ENCODE measurements at regions of chr14 and their contacts with region 1.

Region 1: GRCh38 chr14:63877550-63877939 is 24.7 kb downstream of the SYNE2 start:
- DNase-seq: no peak
- ATAC-seq: no peak
- H3K4me3 ChIP-seq: no peak overlapping the region
- H3K4me3 Mint-ChIP-seq: no peak overlapping the region
- H3K27ac ChIP-seq: no peak overlapping the region
- H3K27ac Mint-ChIP-seq: no peak overlapping the region
- H3K4me1 ChIP-seq: peaks cover 4% of the 10 kb centered on the region
- H3K4me1 Mint-ChIP-seq: peaks cover 42% of the 10 kb centered on the region
- H3K27me3 ChIP-seq: no peaks in the 10 kb centered on the region
- H3K27me3 Mint-ChIP-seq: no peaks in the 10 kb centered on the region
- CTCF ChIP-seq: no peak

Region 2: GRCh38 chr14:63686951-63687350 is 190.6 kb before region 1 on chr14:
- CTCF ChIA-PET with region 1: no interaction called
- POLR2A ChIA-PET with region 1: no interaction called
- intact Hi-C with region 1: no loop called
- DNase-seq: no peak
- ATAC-seq: no peak
- H3K4me3 ChIP-seq: no peak overlapping the region
- H3K4me3 Mint-ChIP-seq: no peak overlapping the region
- H3K27ac ChIP-seq: no peak overlapping the region
- H3K27ac Mint-ChIP-seq: no peak overlapping the region
- H3K4me1 ChIP-seq: no peaks in the 10 kb centered on the region
- H3K4me1 Mint-ChIP-seq: peaks cover 2% of the 10 kb centered on the region
- H3K27me3 ChIP-seq: no peaks in the 10 kb centered on the region
- H3K27me3 Mint-ChIP-seq: no peaks in the 10 kb centered on the region
- CTCF ChIP-seq: no peak

Region 3: DNA sequence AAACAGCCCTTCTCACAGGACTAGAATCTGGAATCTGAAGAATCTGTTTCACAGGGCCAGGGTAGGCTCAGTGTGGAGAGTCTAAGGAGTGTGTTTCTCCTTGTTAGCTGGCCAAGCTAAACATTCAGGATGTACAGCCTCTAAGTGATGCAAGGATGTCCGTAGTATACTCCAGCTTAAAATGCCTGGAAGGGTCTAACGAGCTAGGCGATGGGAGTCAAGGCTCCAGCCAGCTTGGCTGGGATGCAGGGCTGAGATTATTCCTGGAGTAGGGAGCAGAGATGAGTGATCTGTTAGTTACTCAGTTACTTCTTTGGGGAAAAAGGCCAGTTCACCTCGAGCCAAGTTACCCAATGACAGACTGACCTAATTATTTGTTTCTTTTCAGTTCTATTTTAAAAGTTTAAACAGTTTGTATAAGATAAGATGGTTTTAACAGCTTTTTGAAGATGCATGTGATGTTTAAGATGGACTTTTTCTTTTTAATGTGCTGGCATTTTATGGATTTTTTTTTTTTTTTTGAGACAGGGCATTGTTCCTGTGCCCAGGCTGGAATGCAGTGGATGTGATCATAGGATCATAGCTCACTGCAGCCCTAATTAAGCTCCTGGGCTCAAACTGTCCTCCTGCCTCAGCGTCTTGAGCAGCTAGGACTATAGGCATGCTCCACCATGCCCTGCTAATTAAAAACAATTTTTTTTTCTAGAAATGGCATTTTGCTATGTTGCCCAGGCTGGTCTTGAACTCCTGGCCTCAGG is 16.3 kb after region 1 on chr14:
- CTCF ChIA-PET with region 1: no interaction called
- POLR2A ChIA-PET with region 1: interaction called, 3 read pairs
- intact Hi-C with region 1: loop called in 1 of 2 experiments (anchors 2 kb)
- DNase-seq: no peak
- ATAC-seq: no peak
- H3K4me3 ChIP-seq: no peak overlapping the region
- H3K4me3 Mint-ChIP-seq: no peak overlapping the region
- H3K27ac ChIP-seq: no peak overlapping the region
- H3K27ac Mint-ChIP-seq: no peak overlapping the region
- H3K4me1 ChIP-seq: no peaks in the 10 kb centered on the region
- H3K4me1 Mint-ChIP-seq: peaks cover 44% of the 10 kb centered on the region
- H3K27me3 ChIP-seq: no peaks in the 10 kb centered on the region
- H3K27me3 Mint-ChIP-seq: no peaks in the 10 kb centered on the region
- CTCF ChIP-seq: no peak

Region 4: DNA sequence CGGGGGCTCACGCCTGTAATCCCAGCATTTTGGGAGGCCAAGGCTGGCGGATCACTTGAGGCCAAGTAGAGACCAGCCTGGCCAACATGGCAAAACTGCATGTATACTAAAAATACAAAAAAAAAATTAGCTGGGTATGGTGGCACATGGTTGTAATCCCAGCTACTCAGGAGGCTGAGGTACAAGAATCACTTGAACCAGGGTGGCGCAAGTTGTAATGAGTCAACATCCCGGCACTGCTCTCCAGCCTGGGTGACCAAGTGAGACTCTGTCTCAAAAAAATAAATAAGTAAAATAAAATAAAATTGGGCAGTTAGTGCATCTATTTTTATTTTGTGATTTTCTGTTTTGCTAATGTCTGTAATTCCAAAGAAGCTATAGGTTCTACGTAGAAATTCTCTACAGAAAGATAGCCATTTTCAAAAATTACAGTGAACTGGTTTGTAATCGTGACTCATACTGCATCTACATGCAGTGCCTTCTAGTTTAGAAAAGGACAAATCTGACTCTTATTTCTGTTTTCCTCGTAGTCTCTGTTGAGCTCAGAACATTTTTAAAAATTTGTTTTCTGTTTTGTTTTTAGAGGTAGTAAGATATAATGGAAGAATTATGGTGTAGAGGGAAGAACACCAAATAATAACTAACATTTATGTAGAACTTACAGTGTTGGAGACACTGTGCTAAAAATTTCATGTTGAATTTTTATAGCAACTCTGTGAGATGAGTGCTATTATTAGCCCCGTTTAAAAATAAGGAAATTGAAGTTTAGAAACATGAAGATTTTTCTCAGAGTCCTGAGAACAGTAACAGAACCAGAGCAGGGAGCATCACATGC is 176.4 kb after region 1 on chr14:
- CTCF ChIA-PET with region 1: no interaction called
- POLR2A ChIA-PET with region 1: no interaction called
- intact Hi-C with region 1: no loop called
- DNase-seq: no peak
- ATAC-seq: no peak
- H3K4me3 ChIP-seq: no peak overlapping the region
- H3K4me3 Mint-ChIP-seq: no peak overlapping the region
- H3K27ac ChIP-seq: no peak overlapping the region
- H3K27ac Mint-ChIP-seq: no peak overlapping the region
- H3K4me1 ChIP-seq: no peaks in the 10 kb centered on the region
- H3K4me1 Mint-ChIP-seq: no peaks in the 10 kb centered on the region
- H3K27me3 ChIP-seq: no peaks in the 10 kb centered on the region
- H3K27me3 Mint-ChIP-seq: no peaks in the 10 kb centered on the region
- CTCF ChIP-seq: no peak

Region 5: GRCh38 chr14:64434528-64434927 is 557.0 kb after region 1 on chr14:
- CTCF ChIA-PET with region 1: no interaction called
- POLR2A ChIA-PET with region 1: no interaction called
- intact Hi-C with region 1: no loop called
- DNase-seq: no peak
- ATAC-seq: no peak
- H3K4me3 ChIP-seq: no peak overlapping the region
- H3K4me3 Mint-ChIP-seq: no peak overlapping the region
- H3K27ac ChIP-seq: no peak overlapping the region
- H3K27ac Mint-ChIP-seq: no peak overlapping the region
- H3K4me1 ChIP-seq: no peaks in the 10 kb centered on the region
- H3K4me1 Mint-ChIP-seq: peaks cover 12% of the 10 kb centered on the region
- H3K27me3 ChIP-seq: no peaks in the 10 kb centered on the region
- H3K27me3 Mint-ChIP-seq: no peaks in the 10 kb centered on the region
- CTCF ChIP-seq: no peak

Measured in CD8-positive, alpha-beta T cell (primary cell).